Activated T-helper 1 cell treated with anti-CD3 and anti-CD28 coated beads, Interleukin-12 subunit alpha, Interleukin-12 subunit beta, Interleukin-2, Interleukin-4 antibody, amounts not matched to agents 30 ng/mL and 10 ng/mL and 1 ng/mL, durations not matched to agents 14 hours and 24 hours and 36 hours (primary cell): ENCODE measurements at regions of chr17 and their contacts with region 1.

Region 1: DNA sequence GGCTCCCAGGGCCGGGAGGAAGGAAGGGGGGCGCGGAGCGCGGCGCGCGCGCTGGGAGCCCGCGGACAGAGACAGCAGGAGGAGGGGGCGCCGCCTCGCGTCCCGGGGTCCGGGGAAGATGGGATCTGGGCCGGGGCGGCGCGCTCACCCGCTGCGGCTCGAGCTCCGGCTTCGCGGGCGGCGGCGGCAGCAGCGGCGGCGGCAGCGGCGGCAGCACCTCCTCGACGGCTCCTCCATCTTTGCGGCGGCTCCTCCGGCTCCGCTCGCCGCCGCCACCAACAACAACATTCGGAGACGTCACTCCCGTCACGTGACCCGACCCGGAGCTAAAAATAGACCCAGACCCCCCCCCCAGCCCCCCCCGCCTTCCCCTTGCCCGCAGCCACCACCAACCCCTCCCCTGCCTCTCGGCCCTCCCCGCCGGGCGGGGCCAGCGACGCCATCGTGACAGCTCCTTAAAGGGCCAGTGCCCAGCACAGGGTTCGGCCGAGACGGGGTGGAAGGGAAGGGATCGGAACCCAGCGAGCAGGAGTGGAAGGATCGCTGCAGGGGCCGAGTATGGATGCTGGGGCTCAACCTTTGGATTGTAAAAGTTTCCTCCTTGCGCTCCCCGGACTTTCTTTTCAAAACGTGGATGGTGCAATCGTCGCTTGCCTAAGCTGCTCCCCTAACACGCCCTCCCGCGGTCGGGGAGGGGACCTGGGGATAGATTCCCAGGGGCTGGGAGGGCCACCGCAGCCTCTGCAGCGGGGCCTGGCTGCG is at the start of gene HDAC5:
- DNase-seq: peak; percentile 92
- H3K4me3 Mint-ChIP-seq: peak within 1 kb of the TSS; percentile 91
- H3K27ac Mint-ChIP-seq: peak within 1 kb of the TSS; percentile 96
- H3K4me1 Mint-ChIP-seq: peaks cover 25% of the 10 kb centered on the region
- H3K27me3 Mint-ChIP-seq: peaks cover 12% of the 10 kb centered on the region
- total RNA-seq, gene HDAC5: 20.6 and 22.8 TPM in 2 replicates

Region 2: DNA sequence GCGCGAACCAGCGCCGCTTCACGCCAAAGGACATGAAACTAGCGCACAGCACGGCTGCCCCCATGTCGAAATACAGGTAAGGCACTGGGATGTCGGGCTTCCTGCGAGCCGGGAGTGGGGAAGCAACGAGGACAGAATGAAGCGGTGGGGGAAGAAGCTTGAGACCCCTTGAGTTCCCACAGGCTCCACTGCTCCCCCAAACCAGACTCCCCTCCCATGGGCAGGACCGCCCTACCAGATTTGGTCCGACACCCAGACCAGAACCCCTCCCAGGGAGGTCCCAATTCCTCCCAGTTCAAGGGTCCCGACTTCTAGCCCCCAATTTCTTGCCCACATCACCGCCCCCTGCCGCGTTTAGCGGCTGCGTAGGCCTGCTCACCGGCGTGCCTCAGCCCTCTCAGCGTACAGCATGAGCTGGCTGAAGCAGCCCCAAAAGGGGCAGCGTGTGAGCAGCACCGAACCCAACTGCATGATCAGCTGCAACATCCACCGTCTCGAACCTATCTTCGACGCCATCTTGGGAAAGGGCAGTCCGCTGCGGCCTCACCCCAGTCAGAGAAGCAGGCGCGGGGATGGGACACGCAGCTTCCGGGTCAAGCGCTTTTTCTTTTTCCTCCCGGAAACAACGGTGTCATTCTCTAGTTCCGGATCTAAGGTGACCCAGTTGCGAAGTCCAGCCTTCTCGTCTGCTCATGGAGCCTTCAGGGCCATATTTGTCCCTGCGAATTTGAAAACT is 108.9 kb before region 1 on chr17 and contains the start of gene TMEM101:
- intact Hi-C with region 1: loop called (anchors 2 kb)
- DNase-seq: peak; percentile 84
- H3K4me3 Mint-ChIP-seq: peak within 1 kb of the TSS; percentile 100
- H3K27ac Mint-ChIP-seq: peak within 1 kb of the TSS; percentile 98
- H3K4me1 Mint-ChIP-seq: peaks cover 16% of the 10 kb centered on the region
- H3K27me3 Mint-ChIP-seq: no peaks in the 10 kb centered on the region
- total RNA-seq, gene TMEM101: 31.6 and 32.8 TPM in 2 replicates

Region 3: DNA sequence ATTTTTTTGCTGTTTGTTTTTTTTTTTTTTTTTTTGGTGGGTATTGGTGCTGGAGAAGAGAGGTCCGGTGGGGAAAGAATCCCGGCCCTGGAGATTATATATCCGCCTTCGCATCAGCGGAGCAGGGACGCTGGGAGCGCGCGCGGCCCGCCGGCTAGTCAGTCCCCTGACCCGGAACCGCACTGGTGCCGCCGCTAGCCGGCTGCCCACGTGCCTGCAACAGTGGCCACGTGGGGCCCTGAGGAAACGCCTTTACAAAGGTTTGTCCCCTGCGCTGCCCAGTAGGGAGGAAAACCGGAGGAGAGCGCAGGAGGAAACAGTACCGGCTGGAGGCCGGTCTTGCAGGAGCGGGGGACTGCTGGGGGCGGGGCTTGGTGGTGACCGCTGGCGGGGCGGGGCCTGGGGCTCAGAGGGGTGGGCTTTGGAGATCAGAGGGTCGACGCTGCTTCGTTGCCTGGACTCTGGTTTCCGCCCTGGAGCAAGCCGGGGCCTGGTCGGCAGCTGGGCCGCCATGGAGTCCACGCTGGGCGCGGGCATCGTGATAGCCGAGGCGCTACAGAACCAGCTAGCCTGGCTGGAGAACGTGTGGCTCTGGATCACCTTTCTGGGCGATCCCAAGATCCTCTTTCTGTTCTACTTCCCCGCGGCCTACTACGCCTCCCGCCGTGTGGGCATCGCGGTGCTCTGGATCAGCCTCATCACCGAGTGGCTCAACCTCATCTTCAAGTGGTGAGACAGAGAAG is 52.9 kb before region 1 on chr17 and contains the start of gene G6PC3:
- intact Hi-C with region 1: loop called (anchors 1 kb)
- DNase-seq: peak; percentile 78
- H3K4me3 Mint-ChIP-seq: peak within 1 kb of the TSS; percentile 98
- H3K27ac Mint-ChIP-seq: peak within 1 kb of the TSS; percentile 99
- H3K4me1 Mint-ChIP-seq: peaks cover 16% of the 10 kb centered on the region
- H3K27me3 Mint-ChIP-seq: no peaks in the 10 kb centered on the region
- total RNA-seq, gene G6PC3: 33.5 and 34.9 TPM in 2 replicates

Region 4: GRCh38 chr17:44086364-44087311 is 36.9 kb before region 1 on chr17:
- intact Hi-C with region 1: loop called (anchors 2 kb)
- DNase-seq: no peak
- H3K4me3 Mint-ChIP-seq: no peak overlapping the region
- H3K27ac Mint-ChIP-seq: peak overlapping the region; percentile 67
- H3K4me1 Mint-ChIP-seq: peaks cover 20% of the 10 kb centered on the region
- H3K27me3 Mint-ChIP-seq: no peaks in the 10 kb centered on the region

Region 5: GRCh38 chr17:44159519-44160210 is 36.1 kb after region 1 on chr17:
- intact Hi-C with region 1: no loop called
- DNase-seq: no peak
- H3K4me3 Mint-ChIP-seq: no peak overlapping the region
- H3K27ac Mint-ChIP-seq: no peak overlapping the region
- H3K4me1 Mint-ChIP-seq: no peaks in the 10 kb centered on the region
- H3K27me3 Mint-ChIP-seq: no peaks in the 10 kb centered on the region

Region 6: GRCh38 chr17:44235583-44235936 is 112.0 kb after region 1 on chr17:
- intact Hi-C with region 1: no loop called
- DNase-seq: no peak
- H3K4me3 Mint-ChIP-seq: no peak overlapping the region
- H3K27ac Mint-ChIP-seq: no peak overlapping the region
- H3K4me1 Mint-ChIP-seq: peaks cover 7% of the 10 kb centered on the region
- H3K27me3 Mint-ChIP-seq: peaks cover 10% of the 10 kb centered on the region